GM10248 (cell line): ENCODE measurements at regions of chr6 and their contacts with region 1.

Region 1: DNA sequence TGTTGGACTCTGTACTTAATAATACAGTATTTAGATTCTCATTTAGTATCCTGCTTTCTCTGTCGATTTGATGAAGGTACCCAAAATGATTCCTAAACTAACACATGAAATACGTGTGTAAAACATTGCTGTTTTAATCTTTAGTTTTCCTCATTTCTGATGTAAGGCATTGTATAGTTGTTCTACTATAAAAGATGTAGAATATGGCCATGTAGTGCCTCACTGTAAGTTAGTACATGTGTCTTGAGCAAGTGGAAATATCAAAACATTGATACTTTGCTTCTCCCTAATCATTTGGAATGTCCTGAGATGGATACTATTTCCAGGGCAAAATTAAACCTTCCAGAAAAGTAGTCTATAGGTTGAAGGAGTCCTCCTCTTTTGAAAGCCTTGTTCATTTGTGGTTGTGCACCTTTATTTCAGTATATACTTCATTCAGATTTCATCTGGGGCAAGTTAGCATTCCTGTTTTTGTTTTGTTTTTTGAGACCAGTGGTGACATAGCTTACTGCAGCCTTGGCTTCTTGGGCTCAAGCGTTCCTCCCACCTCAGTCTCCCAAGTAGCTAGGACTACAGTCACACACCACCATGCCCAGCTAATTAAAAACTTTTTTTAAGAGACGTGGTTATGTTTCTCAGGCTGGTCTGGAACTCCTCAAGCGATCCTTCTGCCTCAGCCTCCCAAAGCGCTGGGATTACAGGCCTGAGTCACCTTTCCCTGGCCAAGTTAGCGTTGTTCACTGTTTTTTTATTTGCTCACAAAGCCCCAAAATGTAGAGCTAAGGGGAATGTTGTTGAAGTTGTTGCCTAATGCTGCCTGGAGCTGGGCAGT is 11.6 kb downstream of the SRSF3 start:
- DNase-seq: no peak
- CTCF ChIP-seq: no peak

Region 2: DNA sequence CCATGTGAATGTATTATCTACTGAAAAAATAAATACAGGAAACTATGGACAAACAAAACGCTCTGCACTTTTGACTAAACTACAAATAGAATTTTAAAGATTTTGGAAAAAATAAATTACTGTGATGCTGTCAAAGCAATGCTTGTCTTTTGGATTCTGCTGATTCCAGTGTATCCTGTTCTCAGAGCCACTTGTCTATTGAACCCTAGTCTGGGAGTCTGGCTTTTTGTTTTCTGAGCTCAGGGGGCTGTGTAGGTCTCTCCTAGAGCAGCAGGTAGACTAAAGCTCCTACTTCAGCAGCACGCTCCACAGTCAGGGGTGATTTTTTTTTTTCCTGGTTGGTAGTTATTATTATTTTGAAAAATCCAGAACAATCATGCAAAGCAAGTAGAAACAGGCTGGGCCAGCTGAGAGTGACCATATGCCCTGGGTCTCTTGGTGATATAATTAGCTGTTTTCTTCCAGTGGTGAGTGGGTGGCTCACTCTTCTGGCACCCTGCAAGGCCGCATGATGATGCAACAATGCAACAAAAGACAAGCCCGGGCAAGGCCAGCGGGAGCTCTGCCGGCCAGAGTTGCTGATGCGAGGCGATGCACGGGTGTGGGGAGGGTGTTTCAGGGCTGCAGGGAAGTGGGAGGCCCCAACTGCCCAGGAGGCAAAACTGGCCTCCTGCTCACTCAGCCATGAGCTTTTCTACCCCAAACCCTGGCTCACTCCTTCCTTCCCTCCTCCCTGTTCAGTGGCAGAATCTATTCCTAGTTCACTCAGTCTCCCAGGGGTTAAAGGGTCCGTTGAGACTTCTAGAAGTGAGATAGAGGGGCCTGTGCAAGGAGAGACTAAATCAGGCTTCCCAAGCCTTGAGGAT is 61.2 kb after region 1 on chr6:
- CTCF ChIA-PET with region 1: no interaction called
- POLR2A ChIA-PET with region 1: interaction called, 11 read pairs
- DNase-seq: peak; percentile 76
- CTCF ChIP-seq: no peak